Activated naive CD4-positive, alpha-beta T cell treated with anti-CD3 and anti-CD28 coated beads for 36 hours (primary cell): ENCODE measurements at regions of chr1 and their contacts with region 1.

Region 1: DNA sequence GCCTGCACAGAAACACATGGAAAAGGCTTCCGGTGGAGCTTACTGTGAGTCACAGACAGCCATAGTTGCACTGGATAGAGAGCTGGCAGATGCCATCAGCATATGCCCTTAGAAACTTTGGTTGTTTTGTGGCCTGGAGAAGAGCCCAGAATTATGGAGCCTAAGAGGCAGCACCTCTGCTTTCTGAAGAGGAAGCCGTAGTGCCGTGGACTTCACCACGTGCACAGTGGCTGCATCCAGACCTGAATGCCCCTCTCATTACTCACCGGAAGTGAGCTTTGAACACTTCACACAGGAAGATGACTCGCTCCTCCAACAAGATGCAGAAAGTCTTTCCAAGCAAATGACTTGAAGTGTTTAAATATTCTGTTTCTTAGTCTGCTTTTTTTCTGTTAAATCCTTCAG is 28.4 kb downstream of the JUN start:
- DNase-seq: peak; percentile 86
- H3K4me3 Mint-ChIP-seq: no peak overlapping the region
- H3K27ac Mint-ChIP-seq: peak overlapping the region; percentile 71
- H3K4me1 Mint-ChIP-seq: peaks cover 41% of the 10 kb centered on the region
- H3K27me3 Mint-ChIP-seq: no peaks in the 10 kb centered on the region

Region 2: GRCh38 chr1:58768971-58769808 is 13.7 kb after region 1 on chr1:
- CTCF ChIA-PET with region 1: interaction called, 7 read pairs
- intact Hi-C with region 1: loop called (anchors 1 kb)
- DNase-seq: peak; percentile 71
- H3K4me3 Mint-ChIP-seq: no peak overlapping the region
- H3K27ac Mint-ChIP-seq: no peak overlapping the region
- H3K4me1 Mint-ChIP-seq: peaks cover 12% of the 10 kb centered on the region
- H3K27me3 Mint-ChIP-seq: no peaks in the 10 kb centered on the region